Activated naive CD4-positive, alpha-beta T cell treated with anti-CD3 and anti-CD28 coated beads for 36 hours (primary cell): ENCODE measurements at regions of chr16 and their contacts with region 1.

Region 1: GRCh38 chr16:2459647-2460390 is at the start of gene TEDC2:
- DNase-seq: peak; percentile 99
- H3K4me3 Mint-ChIP-seq: peak within 1 kb of the TSS; percentile 74
- H3K27ac Mint-ChIP-seq: peak within 1 kb of the TSS; percentile 64
- H3K4me1 Mint-ChIP-seq: peaks cover 11% of the 10 kb centered on the region
- H3K27me3 Mint-ChIP-seq: no peaks in the 10 kb centered on the region
- total RNA-seq, gene TEDC2: 24.2 to 24.8 TPM

Region 2: DNA sequence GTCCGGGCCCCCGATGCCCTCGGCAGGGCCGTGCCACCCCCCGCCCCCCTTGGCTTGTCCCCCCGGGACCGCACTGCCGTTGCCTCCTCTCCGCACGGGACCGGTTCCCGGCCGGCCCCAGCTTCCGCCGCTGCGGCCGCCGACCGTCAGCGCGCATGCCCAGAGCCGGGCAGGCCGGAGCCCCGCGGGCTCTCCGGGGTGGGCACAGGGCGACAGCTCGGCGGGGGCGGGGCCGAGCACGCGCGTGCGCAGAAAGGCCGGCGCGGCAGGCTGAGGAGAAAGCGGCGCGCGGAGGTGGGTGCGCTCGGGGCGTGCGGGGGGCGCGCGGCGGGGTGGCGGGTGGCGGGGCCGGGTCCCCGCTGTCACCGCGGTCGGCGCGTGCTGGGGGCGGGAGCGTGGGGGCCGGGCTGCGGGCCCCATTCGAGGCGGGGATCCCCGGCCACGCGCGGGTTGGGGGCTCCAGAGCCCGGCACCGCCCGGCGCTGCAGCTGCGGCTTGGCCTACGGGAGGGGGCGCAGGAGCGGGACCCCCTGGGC is 15.1 kb after region 1 on chr16 and contains the start of gene TBC1D24:
- CTCF ChIA-PET with region 1: no interaction called
- intact Hi-C with region 1: loop called (anchors 1 kb)
- DNase-seq: peak; percentile 77
- H3K4me3 Mint-ChIP-seq: peak within 1 kb of the TSS; percentile 77
- H3K27ac Mint-ChIP-seq: no peak within 1 kb of the TSS
- H3K4me1 Mint-ChIP-seq: peaks cover 18% of the 10 kb centered on the region
- H3K27me3 Mint-ChIP-seq: peaks cover 19% of the 10 kb centered on the region
- total RNA-seq, gene TBC1D24: 8.1 to 8.6 TPM

Region 3: GRCh38 chr16:2513405-2514322 is 53.8 kb after region 1 on chr16 and contains the start of gene ATP6V0C:
- CTCF ChIA-PET with region 1: no interaction called
- intact Hi-C with region 1: no loop called
- DNase-seq: peak; percentile 89
- H3K4me3 Mint-ChIP-seq: peak within 1 kb of the TSS; percentile 90
- H3K27ac Mint-ChIP-seq: peak within 1 kb of the TSS; percentile 91
- H3K4me1 Mint-ChIP-seq: peaks cover 49% of the 10 kb centered on the region
- H3K27me3 Mint-ChIP-seq: no peaks in the 10 kb centered on the region
- total RNA-seq, gene ATP6V0C: 81.9 TPM